Right ventricle myocardium superior (tissue), 1 donor: ENCODE measurements at regions of chr1 and their contacts with region 1.

Region 1: DNA sequence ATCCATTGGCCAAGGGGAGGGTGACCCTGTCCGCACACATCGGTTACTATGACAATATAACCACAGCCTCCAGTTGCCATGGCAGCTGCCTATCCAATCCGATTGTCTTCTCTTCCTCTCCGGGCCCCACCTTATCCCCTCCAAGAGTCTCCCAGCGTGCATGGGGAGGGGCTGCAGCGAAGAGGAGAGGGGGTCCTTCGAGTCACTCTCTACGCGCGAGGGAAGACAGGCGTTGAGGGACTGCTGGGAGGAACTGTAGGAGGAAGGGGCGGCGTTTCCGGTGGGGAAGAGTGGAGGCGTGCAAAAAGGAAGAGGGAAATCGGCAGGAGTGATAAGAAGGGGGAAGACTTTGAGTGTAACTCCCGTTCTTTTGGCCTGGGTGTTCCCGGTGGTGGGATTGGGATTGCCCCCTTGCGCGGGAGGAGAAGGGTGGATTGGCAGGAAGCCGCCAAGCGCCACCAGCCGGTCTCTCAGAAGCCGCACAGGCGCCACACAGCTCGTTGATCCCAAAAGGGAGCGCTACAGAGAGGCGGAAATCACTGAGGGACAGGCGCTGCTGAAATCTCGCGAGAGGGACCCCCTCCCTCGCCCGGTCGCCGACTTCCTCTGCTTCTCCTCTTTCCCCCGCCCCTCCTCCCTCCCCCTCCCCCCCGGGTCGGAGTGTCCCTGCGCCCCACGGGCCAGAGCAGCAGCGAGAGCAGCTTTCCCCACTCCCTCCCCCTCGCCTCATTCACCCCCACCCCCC is 384 bp upstream of the SMG7 start:
- DNase-seq: peak; percentile 98
- ATAC-seq: peak; percentile 87

Region 2: GRCh38 chr1:183124259-183124658 is 347.7 kb before region 1 on chr1:
- intact Hi-C with region 1: no loop called
- DNase-seq: peak; percentile 53
- ATAC-seq: no peak

Region 3: DNA sequence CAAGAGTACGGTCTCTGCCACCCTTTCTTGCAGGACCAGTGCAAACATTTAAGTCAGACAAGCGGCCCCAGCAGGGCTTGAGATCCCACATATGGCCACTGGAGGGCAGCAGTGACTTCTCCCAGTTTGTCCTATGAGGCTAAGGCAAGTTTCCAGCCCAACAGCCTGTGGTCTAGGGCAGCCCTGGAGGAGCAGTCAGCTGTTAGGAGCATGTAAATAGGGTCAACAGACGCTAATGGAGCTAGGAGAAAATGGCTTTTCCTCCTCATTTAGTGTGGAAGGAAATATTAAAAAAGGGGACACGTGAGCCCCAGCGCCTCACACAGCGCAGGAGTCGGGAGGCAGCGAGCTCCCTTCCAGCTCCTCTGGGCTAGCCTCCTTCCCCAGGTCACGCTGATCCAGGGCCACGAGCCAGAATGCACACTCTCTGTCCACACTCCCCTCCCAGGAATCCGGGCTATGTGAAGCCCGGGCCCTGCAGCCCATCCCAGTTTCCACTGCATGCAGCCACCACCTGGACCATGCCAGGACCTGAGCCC is 190.3 kb before region 1 on chr1:
- intact Hi-C with region 1: loop called (anchors 5 kb)
- DNase-seq: peak; percentile 95
- ATAC-seq: peak; percentile 91

Region 4: GRCh38 chr1:183543619-183544204 is 71.8 kb after region 1 on chr1:
- intact Hi-C with region 1: loop called (anchors 5 kb)
- DNase-seq: no peak
- ATAC-seq: peak; percentile 82

Region 5: DNA sequence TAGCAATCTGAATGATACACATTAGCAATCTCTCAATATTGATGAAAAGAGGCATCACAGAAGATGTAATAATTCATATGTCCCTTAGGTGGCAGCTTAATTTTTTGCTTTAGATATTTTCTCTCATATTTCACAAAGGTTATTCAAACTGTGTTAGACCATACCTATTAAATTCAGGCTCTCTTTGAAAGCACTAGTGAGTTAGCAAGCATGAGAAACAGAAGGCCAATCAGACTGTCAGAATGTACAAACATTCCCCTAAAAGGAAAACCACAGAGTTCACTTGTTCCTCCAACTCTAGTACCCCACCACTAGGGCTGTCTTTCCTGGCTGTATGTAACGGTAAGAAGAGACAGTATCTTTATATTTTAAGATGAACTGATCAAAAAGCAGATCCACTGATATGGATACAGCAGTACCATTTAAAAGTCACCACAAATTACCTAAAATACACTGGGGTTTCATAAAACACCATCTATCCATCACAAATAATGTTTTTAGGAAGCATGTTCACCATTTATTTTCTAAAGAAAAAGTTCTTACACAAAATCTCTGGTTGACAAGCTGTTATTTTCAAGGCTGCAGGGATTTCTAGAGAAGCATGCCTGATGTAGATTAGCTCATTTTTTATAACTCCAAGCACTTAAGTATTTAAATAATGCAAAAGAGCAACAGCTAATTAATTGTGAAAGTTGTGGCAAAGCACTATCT is 161.9 kb after region 1 on chr1:
- intact Hi-C with region 1: loop called (anchors 5 kb)
- DNase-seq: no peak
- ATAC-seq: no peak